HepG2 (cell line): ENCODE measurements at regions of chr3 and their contacts with region 1.

Region 1: GRCh38 chr3:101724329-101725193 is at the start of gene CEP97:
- DNase-seq: peak; percentile 87
- ATAC-seq: peak; percentile 99
- H3K4me3 ChIP-seq: peak within 1 kb of the TSS; percentile 81 to 86 (median 82)
- H3K27ac ChIP-seq: peak within 1 kb of the TSS; percentile 18
- H3K4me1 ChIP-seq: peaks cover 36% of the 10 kb centered on the region
- H3K27me3 ChIP-seq: no peaks in the 10 kb centered on the region; a peak in 1 of 5 replicates
- CTCF ChIP-seq: no peak
- EP300 ChIP-seq: no peak
- POLR2A ChIP-seq: peak; percentile 24 to 41; a peak in 1 of 4 replicates
- RAD21 ChIP-seq: no peak
- total RNA-seq, gene CEP97: 6.5 and 10.2 TPM in 2 replicates

Region 2: GRCh38 chr3:101779047-101779821 is 54.7 kb after region 1 on chr3 and contains the start of gene NXPE3:
- CTCF ChIA-PET with region 1: no interaction called
- POLR2A ChIA-PET with region 1: interaction called, 7 read pairs
- in situ Hi-C with region 1: no loop called
- intact Hi-C with region 1: loop called (anchors 5 kb)
- DNase-seq: peak; percentile 65
- ATAC-seq: peak; percentile 97
- H3K4me3 ChIP-seq: peak within 1 kb of the TSS; percentile 68 to 89 (median 72)
- H3K27ac ChIP-seq: no peak within 1 kb of the TSS
- H3K4me1 ChIP-seq: peaks cover 25% of the 10 kb centered on the region
- H3K27me3 ChIP-seq: no peaks in the 10 kb centered on the region; a peak in 1 of 5 replicates
- CTCF ChIP-seq: peak; percentile 11; the same call in 1 of the 2 replicates
- EP300 ChIP-seq: no peak
- POLR2A ChIP-seq: peak in 1 of 2 experiments; percentile 54; a peak in 1 of 4 replicates
- RAD21 ChIP-seq: no peak
- total RNA-seq, gene NXPE3: 4.7 and 5.3 TPM in 2 replicates